Caco-2 (cell line): ENCODE measurements at regions of chr1 and their contacts with region 1.

Region 1: GRCh38 chr1:219990782-219991510 is 55.4 kb downstream of the EPRS1 start:
- DNase-seq: peak in 1 of 2 experiments; percentile 49
- H3K4me3 ChIP-seq: no peak overlapping the region
- H3K4me3 Mint-ChIP-seq: no peak overlapping the region
- H3K27ac Mint-ChIP-seq: peak overlapping the region; percentile 63
- H3K4me1 ChIP-seq: peaks cover 21% of the 10 kb centered on the region
- H3K4me1 Mint-ChIP-seq: peaks cover 24% of the 10 kb centered on the region
- H3K27me3 ChIP-seq: no peaks in the 10 kb centered on the region
- H3K27me3 Mint-ChIP-seq: no peaks in the 10 kb centered on the region
- CTCF ChIP-seq: peak; percentile 52 to 78

Region 2: DNA sequence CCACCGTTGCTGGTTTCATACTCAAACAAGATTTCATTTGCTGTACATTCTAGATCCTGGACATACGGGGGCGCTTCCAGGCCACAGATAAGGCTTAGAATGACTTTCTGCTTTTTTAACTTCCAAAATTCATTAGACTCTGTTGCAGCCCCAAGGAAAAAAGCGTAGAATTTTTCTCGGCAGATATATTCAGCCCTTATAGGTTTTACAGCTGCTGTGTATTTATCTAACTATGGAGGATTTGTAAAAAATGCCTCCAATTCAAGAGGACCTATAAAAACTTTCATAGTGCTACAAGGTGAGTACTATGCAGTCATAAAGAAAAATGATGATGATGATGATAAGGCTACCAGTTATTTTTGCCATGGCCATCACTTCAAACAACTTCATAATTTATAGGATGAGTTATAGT is 114.1 kb before region 1 on chr1:
- CTCF ChIA-PET with region 1: interaction called, 3 read pairs
- POLR2A ChIA-PET with region 1: no interaction called
- intact Hi-C with region 1: loop called (anchors 1 kb)
- DNase-seq: peak in 1 of 2 experiments; percentile 13
- H3K4me3 ChIP-seq: no peak overlapping the region
- H3K4me3 Mint-ChIP-seq: no peak overlapping the region
- H3K27ac Mint-ChIP-seq: no peak overlapping the region
- H3K4me1 ChIP-seq: no peaks in the 10 kb centered on the region
- H3K4me1 Mint-ChIP-seq: peaks cover 6% of the 10 kb centered on the region
- H3K27me3 ChIP-seq: no peaks in the 10 kb centered on the region
- H3K27me3 Mint-ChIP-seq: peaks cover 3% of the 10 kb centered on the region
- CTCF ChIP-seq: peak; percentile 43 to 61

Region 3: GRCh38 chr1:219973213-219973612 is 17.7 kb before region 1 on chr1:
- CTCF ChIA-PET with region 1: interaction called, 10 read pairs
- POLR2A ChIA-PET with region 1: no interaction called
- intact Hi-C with region 1: no loop called
- DNase-seq: no peak
- H3K4me3 ChIP-seq: no peak overlapping the region
- H3K4me3 Mint-ChIP-seq: no peak overlapping the region
- H3K27ac Mint-ChIP-seq: no peak overlapping the region
- H3K4me1 ChIP-seq: no peaks in the 10 kb centered on the region
- H3K4me1 Mint-ChIP-seq: no peaks in the 10 kb centered on the region
- H3K27me3 ChIP-seq: no peaks in the 10 kb centered on the region
- H3K27me3 Mint-ChIP-seq: no peaks in the 10 kb centered on the region
- CTCF ChIP-seq: no peak

Region 4: DNA sequence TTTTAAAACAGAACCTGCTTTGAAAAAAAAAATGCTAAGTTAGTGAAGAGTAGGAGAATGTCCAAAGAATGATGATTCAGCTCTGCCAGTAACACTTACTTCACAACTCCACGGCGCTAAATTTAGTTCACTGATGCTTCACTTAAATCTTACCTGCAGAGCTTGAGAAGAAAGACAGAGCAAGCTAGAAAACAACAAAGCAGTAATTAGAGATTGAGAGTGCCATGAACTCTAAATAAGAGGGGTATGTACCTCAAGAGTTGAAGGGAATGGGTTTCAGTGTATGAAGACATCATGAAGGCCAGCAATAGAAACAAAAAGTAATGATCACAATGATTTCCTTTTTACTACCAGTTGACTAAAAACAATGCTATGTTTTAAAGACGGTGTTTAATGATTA is 22.6 kb after region 1 on chr1:
- CTCF ChIA-PET with region 1: no interaction called
- POLR2A ChIA-PET with region 1: no interaction called
- intact Hi-C with region 1: loop called (anchors 2 kb)
- DNase-seq: no peak
- H3K4me3 ChIP-seq: no peak overlapping the region
- H3K4me3 Mint-ChIP-seq: no peak overlapping the region
- H3K27ac Mint-ChIP-seq: no peak overlapping the region
- H3K4me1 ChIP-seq: no peaks in the 10 kb centered on the region
- H3K4me1 Mint-ChIP-seq: peaks cover 5% of the 10 kb centered on the region
- H3K27me3 ChIP-seq: no peaks in the 10 kb centered on the region
- H3K27me3 Mint-ChIP-seq: no peaks in the 10 kb centered on the region
- CTCF ChIP-seq: no peak